SK-N-SH (cell line): ENCODE measurements at regions of chr20 and their contacts with region 1.

Region 1: GRCh38 chr20:57622579-57623377 is 2.6 kb upstream of the ZBP1 start:
- DNase-seq: peak; percentile 84
- H3K4me3 ChIP-seq: no peak overlapping the region
- H3K27ac ChIP-seq: no peak overlapping the region
- H3K4me1 ChIP-seq: peaks cover 0 to 10% of the 10 kb centered on the region in 2 experiments; a peak in 1 of 4 replicates
- H3K27me3 ChIP-seq: no peaks in the 10 kb centered on the region
- CTCF ChIP-seq: peak; percentile 78
- EP300 ChIP-seq: no peak
- RAD21 ChIP-seq: peak; percentile 87

Region 2: GRCh38 chr20:57611586-57612311 is 11.0 kb before region 1 on chr20:
- CTCF ChIA-PET with region 1: interaction called, 19 read pairs
- POLR2A ChIA-PET with region 1: no interaction called
- DNase-seq: no peak
- H3K4me3 ChIP-seq: no peak overlapping the region
- H3K27ac ChIP-seq: no peak overlapping the region
- H3K4me1 ChIP-seq: no peaks in the 10 kb centered on the region
- H3K27me3 ChIP-seq: no peaks in the 10 kb centered on the region; the same call in 1 of the 2 replicates
- CTCF ChIP-seq: no peak
- EP300 ChIP-seq: no peak
- RAD21 ChIP-seq: no peak

Region 3: GRCh38 chr20:57638173-57638894 is 15.6 kb after region 1 on chr20:
- CTCF ChIA-PET with region 1: interaction called, 15 read pairs
- POLR2A ChIA-PET with region 1: no interaction called
- DNase-seq: no peak
- H3K4me3 ChIP-seq: no peak overlapping the region
- H3K27ac ChIP-seq: no peak overlapping the region
- H3K4me1 ChIP-seq: no peaks in the 10 kb centered on the region
- H3K27me3 ChIP-seq: no peaks in the 10 kb centered on the region
- CTCF ChIP-seq: no peak
- EP300 ChIP-seq: no peak
- RAD21 ChIP-seq: no peak